Psoas muscle (tissue), 8 donors: ENCODE measurements at regions of chr10 and their contacts with region 1.

Region 1: DNA sequence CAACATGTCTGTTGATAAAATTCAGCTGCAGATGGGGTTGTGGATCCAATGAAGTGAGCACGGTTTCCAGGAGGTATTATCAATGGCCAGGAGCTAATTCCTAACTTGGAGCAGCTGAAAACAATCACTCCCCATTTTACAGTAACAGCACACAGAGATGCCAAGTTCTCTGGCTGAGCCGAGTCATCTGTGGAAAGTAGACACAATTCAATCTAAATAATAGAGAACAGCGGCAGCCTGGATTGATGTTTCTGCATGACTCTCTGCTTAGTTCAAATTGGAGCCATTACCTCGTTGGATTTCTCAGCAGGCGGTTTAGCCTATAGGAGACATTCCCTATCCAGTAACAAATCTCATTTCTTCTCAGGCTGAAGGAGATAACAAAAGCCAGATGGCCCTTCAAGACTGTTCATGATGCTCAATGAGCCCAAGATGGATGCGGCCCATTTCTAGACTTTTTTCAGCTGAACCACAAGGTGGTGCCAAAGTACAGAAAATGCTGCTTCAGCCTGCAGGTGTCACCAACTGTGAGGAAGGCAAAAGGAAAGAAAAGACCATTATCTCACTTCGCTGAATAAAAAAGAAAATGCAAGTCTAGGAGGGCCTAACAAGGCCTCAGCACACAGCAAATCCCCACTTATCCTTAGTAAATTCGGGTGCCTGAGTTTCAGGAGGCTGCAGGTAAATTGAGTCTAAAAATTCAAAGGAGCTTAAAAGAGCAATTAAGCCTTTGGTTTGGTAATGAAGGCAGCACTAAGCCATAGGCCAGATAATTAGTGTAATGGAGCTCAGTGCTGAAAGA is 83.7 kb downstream of the SLC16A9 start:
- DNase-seq: no peak
- ATAC-seq: peak; percentile 79 to 94 (median 88)
- H3K4me3 ChIP-seq: no peak overlapping the region
- H3K27ac ChIP-seq: no peak overlapping the region
- H3K4me1 ChIP-seq: no peaks in the 10 kb centered on the region
- H3K27me3 ChIP-seq: no peaks in the 10 kb centered on the region
- CTCF ChIP-seq: peak; percentile 89

Region 2: DNA sequence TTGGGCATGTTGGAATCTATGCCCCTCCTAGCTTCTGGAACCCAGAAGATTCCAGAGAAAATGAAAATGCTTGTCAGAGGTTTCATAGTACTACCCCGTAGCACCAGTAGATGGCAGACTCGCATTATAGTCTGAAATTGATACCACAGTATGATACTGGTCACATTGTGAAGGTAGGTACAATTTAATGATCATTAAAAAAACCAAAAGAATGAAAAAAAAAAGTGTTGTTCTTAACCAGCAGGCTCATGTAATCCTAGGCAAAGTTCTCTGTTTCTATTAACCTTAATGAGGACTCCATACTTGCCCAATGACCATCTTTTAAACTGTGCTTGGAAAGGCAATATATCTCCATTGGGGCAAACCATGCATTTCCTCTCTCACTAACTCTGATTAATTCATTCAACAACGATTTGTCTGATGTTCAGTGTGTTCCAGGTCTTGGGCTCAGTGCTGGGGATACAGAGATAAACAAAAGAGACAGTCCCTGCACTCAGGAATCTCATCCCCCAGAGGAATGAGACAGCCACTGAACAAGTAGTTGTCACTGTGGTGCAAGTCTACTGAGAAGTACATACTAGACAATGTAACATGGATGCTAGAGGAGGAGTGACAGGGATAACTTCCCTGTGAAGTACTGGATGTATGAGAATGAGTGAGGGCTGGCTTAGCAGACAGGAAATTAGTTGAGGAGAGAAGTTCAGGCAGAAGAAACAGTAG is 673.0 kb before region 1 on chr10:
- intact Hi-C with region 1: loop called in 1 of 2 experiments (anchors 5 kb)
- DNase-seq: no peak
- ATAC-seq: peak; percentile 59 to 79 (median 72)
- H3K4me3 ChIP-seq: no peak overlapping the region
- H3K27ac ChIP-seq: peak overlapping the region; percentile 16
- H3K4me1 ChIP-seq: no peaks in the 10 kb centered on the region
- H3K27me3 ChIP-seq: no peaks in the 10 kb centered on the region
- CTCF ChIP-seq: peak; percentile 83

Region 3: GRCh38 chr10:59240582-59241183 is 385.2 kb before region 1 on chr10:
- intact Hi-C with region 1: loop called (anchors 2 kb)
- DNase-seq: no peak
- ATAC-seq: peak in 2 of 4 donors; percentile 56 to 68
- H3K4me3 ChIP-seq: no peak overlapping the region
- H3K27ac ChIP-seq: no peak overlapping the region
- H3K4me1 ChIP-seq: no peaks in the 10 kb centered on the region
- H3K27me3 ChIP-seq: no peaks in the 10 kb centered on the region
- CTCF ChIP-seq: peak; percentile 83

Region 4: DNA sequence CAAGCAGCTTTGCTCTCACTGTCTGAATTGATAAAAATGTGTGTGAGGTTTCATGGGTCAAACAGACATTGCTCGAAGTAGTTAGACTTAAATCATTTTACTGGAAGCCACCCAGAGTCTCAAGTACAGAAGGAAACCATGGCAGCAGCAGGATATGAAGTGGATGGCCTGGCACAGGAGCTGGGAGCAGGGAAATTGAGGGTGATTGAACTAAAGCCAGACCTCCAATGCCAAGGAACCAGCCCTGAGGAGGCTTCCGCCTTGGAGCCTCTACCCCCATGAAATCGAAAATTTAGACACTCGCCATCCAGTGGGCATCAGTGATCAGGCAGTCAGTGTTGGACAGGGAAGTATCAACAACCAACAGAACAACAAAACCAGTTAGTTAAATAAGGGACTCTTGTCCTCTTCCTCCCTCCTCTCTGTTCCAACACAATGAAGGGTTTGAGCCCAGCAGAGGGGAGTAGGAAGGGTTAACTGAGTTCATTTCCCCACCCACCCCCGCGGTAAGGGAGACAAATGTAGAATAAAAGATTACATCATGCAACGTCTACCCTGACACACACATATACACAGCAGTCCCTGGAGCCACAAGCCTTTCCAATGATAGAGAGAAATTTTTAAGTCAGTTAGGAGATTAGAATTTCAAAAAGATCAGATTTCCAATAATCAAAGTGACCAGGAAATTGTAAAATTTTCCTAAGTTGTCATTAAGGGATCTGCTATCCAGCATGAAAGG is 72.6 kb before region 1 on chr10:
- intact Hi-C with region 1: no loop called
- DNase-seq: no peak
- ATAC-seq: no peak
- H3K4me3 ChIP-seq: no peak overlapping the region
- H3K27ac ChIP-seq: no peak overlapping the region
- H3K4me1 ChIP-seq: no peaks in the 10 kb centered on the region
- H3K27me3 ChIP-seq: no peaks in the 10 kb centered on the region
- CTCF ChIP-seq: no peak

Region 5: GRCh38 chr10:59808896-59809643 is 183.1 kb after region 1 on chr10:
- intact Hi-C with region 1: loop called (anchors 2 kb)
- DNase-seq: peak; percentile 78 to 92
- ATAC-seq: peak; percentile 87 to 92 (median 89)
- H3K4me3 ChIP-seq: no peak overlapping the region
- H3K27ac ChIP-seq: peak overlapping the region; percentile 59
- H3K4me1 ChIP-seq: peaks cover 26% of the 10 kb centered on the region
- H3K27me3 ChIP-seq: no peaks in the 10 kb centered on the region
- CTCF ChIP-seq: peak; percentile 80

Region 6: GRCh38 chr10:59830601-59831259 is 204.8 kb after region 1 on chr10:
- intact Hi-C with region 1: loop called (anchors 2 to 5 kb)
- DNase-seq: peak in 1 of 2 donors; percentile 29
- ATAC-seq: peak; percentile 39 to 76 (median 62)
- H3K4me3 ChIP-seq: no peak overlapping the region
- H3K27ac ChIP-seq: no peak overlapping the region
- H3K4me1 ChIP-seq: peaks cover 38% of the 10 kb centered on the region
- H3K27me3 ChIP-seq: no peaks in the 10 kb centered on the region
- CTCF ChIP-seq: peak; percentile 80

Region 7: GRCh38 chr10:59906417-59907202 is 280.7 kb after region 1 on chr10 and contains the start of gene CCDC6:
- intact Hi-C with region 1: loop called in 1 of 2 experiments (anchors 5 kb)
- DNase-seq: peak; percentile 93 to 96
- ATAC-seq: peak; percentile 91 to 96 (median 96)
- H3K4me3 ChIP-seq: peak within 1 kb of the TSS; percentile 98
- H3K27ac ChIP-seq: peak within 1 kb of the TSS; percentile 97
- H3K4me1 ChIP-seq: peaks cover 28% of the 10 kb centered on the region
- H3K27me3 ChIP-seq: no peaks in the 10 kb centered on the region
- CTCF ChIP-seq: peak; percentile 76
- total RNA-seq, gene CCDC6: 14.5 to 40.1 (median 23.0) TPM

Region 8: GRCh38 chr10:60032723-60033122 is 406.8 kb after region 1 on chr10:
- intact Hi-C with region 1: loop called (anchors 1 to 5 kb)
- DNase-seq: peak; percentile 24 to 58
- ATAC-seq: peak; percentile 89 to 94 (median 90)
- H3K4me3 ChIP-seq: no peak overlapping the region
- H3K27ac ChIP-seq: peak overlapping the region; percentile 88
- H3K4me1 ChIP-seq: peaks cover 25% of the 10 kb centered on the region
- H3K27me3 ChIP-seq: no peaks in the 10 kb centered on the region
- CTCF ChIP-seq: peak; percentile 63

Region 9: DNA sequence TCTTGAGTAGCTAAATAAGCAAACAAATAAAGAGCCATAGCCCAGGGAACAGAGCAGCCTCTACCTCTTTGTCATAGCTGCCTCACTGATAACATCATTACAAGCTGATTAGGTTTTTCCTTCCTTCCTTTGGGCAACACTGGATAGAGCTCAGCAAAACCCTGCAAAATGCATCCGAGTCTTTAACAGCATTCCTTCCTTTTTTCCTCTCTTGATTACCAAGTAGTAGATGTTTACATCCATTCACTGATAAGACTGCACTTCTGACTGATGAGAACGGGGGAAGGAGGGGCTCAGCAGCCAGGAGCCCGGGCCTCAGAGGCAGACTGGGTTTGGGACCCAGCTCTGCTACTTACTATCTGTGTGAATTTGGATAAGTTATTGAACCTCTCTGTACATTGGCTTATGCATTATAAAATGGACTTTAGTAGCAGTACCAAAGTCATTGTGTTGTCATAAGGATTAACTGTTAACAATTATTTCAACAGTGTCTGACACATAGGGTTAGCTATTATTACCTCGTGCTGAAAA is 549.6 kb after region 1 on chr10:
- intact Hi-C with region 1: no loop called
- DNase-seq: no peak
- ATAC-seq: no peak
- H3K4me3 ChIP-seq: no peak overlapping the region
- H3K27ac ChIP-seq: no peak overlapping the region
- H3K4me1 ChIP-seq: peaks cover 7% of the 10 kb centered on the region
- H3K27me3 ChIP-seq: no peaks in the 10 kb centered on the region
- CTCF ChIP-seq: no peak

Region 10: GRCh38 chr10:60848126-60848525 is 1222.2 kb after region 1 on chr10:
- intact Hi-C with region 1: no loop called
- DNase-seq: peak; percentile 25 to 70
- ATAC-seq: peak; percentile 75 to 84 (median 77)
- H3K4me3 ChIP-seq: peak overlapping the region; percentile 16
- H3K27ac ChIP-seq: peak overlapping the region; percentile 96
- H3K4me1 ChIP-seq: peaks cover 42% of the 10 kb centered on the region
- H3K27me3 ChIP-seq: no peaks in the 10 kb centered on the region
- CTCF ChIP-seq: peak; percentile 44